A549 (cell line): ENCODE measurements at regions of chr1 and their contacts with region 1.

Region 1: GRCh38 chr1:227999056-227999930 is 7.5 kb upstream of the WNT3A start:
- DNase-seq: peak; percentile 86 to 92
- ATAC-seq: peak; percentile 89 to 97
- H3K4me3 ChIP-seq: no peak overlapping the region
- H3K27ac ChIP-seq: no peak overlapping the region
- H3K4me1 ChIP-seq: no peaks in the 10 kb centered on the region
- CTCF ChIP-seq: peak; percentile 80
- EP300 ChIP-seq: no peak
- POLR2A ChIP-seq: no peak
- RAD21 ChIP-seq: peak; percentile 88 to 93

Region 2: GRCh38 chr1:228013935-228014930 is 14.9 kb after region 1 on chr1:
- CTCF ChIA-PET with region 1: interaction called, 24 read pairs
- POLR2A ChIA-PET with region 1: no interaction called
- DNase-seq: no peak
- ATAC-seq: no peak
- H3K4me3 ChIP-seq: no peak overlapping the region
- H3K27ac ChIP-seq: no peak overlapping the region
- H3K4me1 ChIP-seq: peaks cover 9% of the 10 kb centered on the region
- CTCF ChIP-seq: no peak
- EP300 ChIP-seq: no peak
- POLR2A ChIP-seq: no peak
- RAD21 ChIP-seq: no peak

Region 3: DNA sequence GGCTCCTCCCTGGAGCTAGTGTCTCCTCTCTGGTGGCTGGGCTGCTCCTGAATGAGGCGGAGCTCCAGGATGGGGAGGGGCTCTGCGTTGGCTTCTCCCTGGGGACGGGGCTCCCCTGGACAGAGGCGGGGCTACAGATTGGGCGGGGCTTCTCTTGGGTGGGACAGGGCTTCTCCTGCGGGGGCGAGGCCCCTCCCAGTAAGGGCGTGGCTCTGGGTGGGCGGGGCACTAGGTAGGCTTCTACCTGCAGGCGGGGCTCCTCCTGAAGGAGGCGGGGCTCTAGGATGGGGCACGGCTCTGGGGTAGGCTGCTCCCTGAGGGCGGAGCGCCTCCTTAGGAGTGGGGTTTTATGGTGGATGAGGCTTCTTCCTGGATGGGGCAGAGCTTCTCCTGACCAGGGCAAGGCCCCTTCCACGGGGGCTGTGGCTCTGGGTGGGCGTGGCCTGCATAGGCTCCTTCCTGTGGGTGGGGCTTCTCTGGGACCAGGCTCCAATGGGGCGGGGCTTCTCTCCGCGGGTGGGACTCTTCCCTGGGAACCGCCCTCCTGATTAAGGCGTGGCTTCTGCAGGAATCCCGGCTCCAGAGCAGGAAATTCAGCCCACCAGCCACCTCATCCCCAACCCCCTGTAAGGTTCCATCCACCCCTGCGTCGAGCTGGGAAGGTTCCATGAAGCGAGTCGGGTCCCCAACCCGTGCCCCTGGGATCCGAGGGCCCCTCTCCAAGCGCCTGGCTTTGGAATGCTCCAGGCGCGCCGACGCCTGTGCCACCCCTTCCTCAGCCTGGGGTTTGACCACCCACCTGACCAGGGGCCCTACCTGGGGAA is 60.6 kb after region 1 on chr1:
- CTCF ChIA-PET with region 1: interaction called, 25 read pairs
- POLR2A ChIA-PET with region 1: no interaction called
- DNase-seq: peak; percentile 73 to 88
- ATAC-seq: peak; percentile 69 to 84
- H3K4me3 ChIP-seq: peak overlapping the region; percentile 59
- H3K27ac ChIP-seq: peak overlapping the region; percentile 64 to 84
- H3K4me1 ChIP-seq: peaks cover 12% of the 10 kb centered on the region; the same call in 2 of the 3 replicates
- CTCF ChIP-seq: no peak
- EP300 ChIP-seq: no peak
- POLR2A ChIP-seq: 0 out of 2 replicates have a peak, but pooled peaks have one; percentile 11
- RAD21 ChIP-seq: no peak

Region 4: DNA sequence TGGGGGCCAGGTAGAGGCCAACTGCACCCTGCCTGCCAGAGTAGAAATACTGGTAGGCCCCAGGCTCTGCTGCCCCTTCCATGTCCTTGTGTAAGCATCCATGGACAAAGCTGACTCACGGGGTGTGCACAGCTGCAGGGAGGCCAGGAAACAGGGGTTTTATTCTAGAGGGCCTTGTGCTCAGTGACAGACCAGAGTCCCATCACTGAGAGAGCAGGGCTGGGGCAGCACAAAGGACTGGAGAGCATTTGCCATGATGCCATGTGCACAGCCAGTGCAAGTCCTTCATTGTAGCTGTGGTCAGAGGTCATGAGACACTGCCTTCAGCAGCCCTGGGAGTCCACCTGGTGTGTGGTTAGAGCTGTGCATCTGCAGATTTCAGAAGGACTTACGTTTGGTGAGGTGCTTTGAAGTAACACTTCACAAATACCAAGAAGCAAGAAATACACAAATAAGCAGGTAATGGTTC is 91.4 kb after region 1 on chr1:
- CTCF ChIA-PET with region 1: interaction called, 18 read pairs
- POLR2A ChIA-PET with region 1: no interaction called
- DNase-seq: no peak
- ATAC-seq: peak; percentile 22 to 25; a peak in 3 of 6 replicates
- H3K4me3 ChIP-seq: no peak overlapping the region
- H3K27ac ChIP-seq: no peak overlapping the region
- H3K4me1 ChIP-seq: peaks cover 49% of the 10 kb centered on the region
- CTCF ChIP-seq: no peak
- EP300 ChIP-seq: no peak
- POLR2A ChIP-seq: no peak
- RAD21 ChIP-seq: no peak

Region 5: DNA sequence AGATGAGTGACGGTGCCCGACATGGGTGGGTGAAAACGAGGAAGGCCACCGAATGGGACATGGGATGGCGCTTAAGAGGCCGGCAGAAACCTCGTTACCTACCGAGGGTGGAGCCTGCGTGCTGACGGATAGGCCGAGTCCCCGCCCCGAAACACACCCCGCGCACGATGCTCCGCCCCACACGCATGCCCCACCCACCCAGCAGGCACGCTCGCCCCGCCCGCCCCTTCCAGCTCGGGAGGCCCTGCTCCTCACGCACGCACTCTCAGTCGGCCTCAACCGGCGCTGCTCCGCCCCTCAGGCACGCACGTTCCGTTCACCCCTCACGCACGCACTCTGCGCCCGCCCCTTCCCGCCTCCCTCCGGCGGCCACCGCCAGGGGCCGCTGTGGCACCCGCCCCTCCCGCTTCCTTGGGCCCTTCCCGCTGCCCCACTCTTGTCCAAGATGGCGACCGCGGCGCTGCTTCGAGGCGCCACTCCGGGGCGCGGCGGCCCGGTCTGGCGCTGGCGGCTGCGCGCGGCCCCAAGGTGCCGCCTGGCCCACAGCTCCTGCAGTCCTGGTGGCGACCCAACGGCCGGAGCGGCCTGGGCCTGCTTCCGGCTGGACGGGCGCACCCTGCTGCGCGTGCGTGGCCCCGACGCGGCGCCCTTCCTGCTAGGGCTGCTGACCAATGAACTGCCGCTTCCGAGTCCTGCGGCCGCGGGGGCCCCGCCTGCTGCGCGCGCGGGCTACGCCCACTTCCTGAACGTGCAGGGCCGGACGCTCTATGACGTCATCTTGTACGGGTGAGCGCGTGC is 166.3 kb after region 1 on chr1 and contains the start of gene IBA57:
- CTCF ChIA-PET with region 1: interaction called, 11 read pairs
- POLR2A ChIA-PET with region 1: interaction called, 7 read pairs
- DNase-seq: peak; percentile 96 to 99
- ATAC-seq: peak; percentile 82 to 90
- H3K4me3 ChIP-seq: peak within 1 kb of the TSS; percentile 66
- H3K27ac ChIP-seq: peak within 1 kb of the TSS; percentile 97 to 100
- H3K4me1 ChIP-seq: peaks cover 11% of the 10 kb centered on the region; the same call in 2 of the 3 replicates
- CTCF ChIP-seq: peak; percentile 94
- EP300 ChIP-seq: peak in 1 of 2 experiments; percentile 15; a peak in 1 of 5 replicates
- POLR2A ChIP-seq: peak; percentile 82
- RAD21 ChIP-seq: no peak; a peak in 1 of 5 replicates
- polyA plus RNA-seq, gene IBA57: 1.5 TPM in 2 replicates